ENCODE measurements at regions of chr2 and their contacts with region 1.

Region 1: DNA sequence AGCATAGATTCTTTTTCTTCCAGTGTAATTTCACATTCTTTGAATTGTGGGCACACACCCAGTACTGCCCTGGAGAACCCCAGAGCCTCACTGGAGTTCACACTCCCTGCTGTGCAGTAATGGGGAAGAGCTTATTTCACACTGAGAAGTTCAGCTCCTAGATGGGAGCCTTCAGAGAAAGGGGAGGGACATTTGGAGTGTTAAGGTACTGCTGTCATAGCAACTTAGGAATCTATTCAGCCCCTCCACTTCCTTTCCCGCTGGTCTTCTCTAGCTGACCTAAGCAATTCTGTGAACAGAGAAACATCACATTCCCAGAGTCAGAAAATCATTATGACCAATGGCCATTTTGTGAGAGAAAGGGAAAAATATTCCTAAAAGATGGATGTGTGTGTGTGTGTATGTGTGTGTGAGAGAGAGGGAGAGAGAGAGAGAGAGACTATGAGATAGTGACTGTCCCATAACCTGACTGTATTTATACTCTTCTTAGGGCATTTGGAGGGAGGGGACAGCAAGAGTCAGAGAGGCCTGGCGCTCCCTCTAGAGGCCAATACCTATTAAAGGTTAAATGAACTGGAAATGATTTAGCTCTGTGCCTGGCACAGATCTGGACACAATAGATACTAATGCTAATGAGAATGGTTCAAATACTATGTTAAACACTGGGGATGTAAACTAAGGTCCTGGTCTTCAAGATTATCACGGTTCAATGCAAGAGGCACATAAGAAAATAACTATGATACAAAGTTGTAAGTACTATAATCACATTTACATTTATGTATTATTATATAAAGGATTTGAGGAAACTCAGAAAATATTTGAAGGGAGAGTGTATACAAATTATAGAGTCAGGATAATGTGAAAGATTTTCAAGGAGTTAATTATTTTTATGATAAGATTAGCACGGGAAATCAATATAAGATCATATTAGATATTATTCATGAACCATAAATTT is 41.5 kb upstream of the RPE start:
- DNase-seq: no peak
- H3K4me3 Mint-ChIP-seq: no peak overlapping the region
- H3K27ac Mint-ChIP-seq: no peak overlapping the region
- H3K4me1 Mint-ChIP-seq: no peaks in the 10 kb centered on the region
- H3K27me3 Mint-ChIP-seq: peaks cover 11% of the 10 kb centered on the region

Region 2: DNA sequence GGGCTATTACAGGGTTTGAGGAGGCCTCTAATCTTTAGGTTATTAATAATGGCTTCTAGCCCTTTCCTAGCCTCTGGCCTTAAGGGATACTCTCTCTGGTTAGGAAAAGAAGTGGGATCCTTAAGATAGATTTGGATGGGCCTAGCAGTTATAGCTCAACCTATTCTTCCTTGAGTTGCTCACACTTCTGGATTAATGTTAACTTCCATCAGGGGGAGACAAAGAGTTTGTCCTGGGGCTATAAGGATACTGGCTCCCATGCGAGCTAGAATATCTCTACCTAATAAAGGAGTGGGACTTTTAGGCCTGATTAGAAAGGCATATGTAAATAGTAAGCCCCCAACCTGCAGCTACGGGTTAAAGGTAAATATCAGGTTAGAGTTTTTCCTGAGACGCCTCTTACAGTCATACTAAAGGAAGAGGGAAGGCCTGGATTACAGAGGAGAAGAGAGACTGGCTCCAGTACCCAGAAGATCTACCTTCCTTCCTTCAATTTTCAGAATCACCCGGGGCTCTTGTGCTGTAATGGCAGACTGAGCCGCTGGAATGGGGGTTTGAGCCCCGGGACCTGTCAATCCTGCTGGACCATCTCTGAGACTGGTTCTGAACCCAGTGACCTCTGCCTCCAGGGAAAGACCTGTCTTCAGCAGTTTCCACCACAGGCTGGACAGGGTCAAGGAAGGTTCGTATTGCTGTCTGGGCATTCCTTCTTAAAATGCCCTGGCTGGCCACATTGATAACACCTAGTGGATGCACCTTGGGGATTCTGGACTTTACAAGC is 1568.5 kb before region 1 on chr2:
- intact Hi-C with region 1: loop called (anchors 10 kb)
- DNase-seq: no peak
- H3K4me3 Mint-ChIP-seq: no peak overlapping the region
- H3K27ac Mint-ChIP-seq: no peak overlapping the region
- H3K4me1 Mint-ChIP-seq: peaks cover 1% of the 10 kb centered on the region
- H3K27me3 Mint-ChIP-seq: peaks cover 2% of the 10 kb centered on the region

Region 3: DNA sequence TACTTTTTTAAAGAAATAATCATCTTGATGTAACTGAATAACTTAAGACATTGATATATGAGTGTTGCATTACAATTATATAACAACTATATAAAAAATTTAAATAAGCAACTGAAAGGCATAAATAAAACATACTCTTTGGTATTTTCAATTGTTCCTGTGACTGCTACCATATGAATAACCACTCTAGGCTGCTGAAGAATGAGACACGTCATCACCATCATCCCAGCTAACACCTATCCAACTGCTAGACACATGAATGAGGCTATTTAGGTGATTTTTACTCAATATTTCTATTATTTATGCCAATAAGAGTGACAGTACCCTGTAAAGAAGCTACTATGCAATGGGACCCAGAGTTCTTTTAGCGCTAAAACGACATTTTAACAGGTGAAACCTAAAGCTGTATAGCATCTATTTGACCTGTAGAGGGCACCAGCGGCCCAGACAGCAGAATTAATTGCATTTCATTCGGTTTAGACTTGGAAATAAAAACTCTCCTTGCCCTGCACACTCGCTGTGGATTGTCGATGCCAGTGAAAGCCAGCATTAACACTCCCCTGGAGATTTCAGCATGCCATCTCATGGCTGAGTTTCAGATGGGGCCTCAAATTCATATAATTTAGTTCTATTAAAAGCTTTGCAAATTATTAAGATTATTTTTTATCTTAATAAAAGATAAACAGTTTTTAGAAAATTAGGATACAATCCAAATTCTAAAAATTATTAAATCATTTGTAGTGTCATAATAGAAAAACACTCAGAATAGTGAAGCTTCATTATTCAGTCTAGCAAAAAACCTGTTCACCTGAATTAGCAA is 626.5 kb before region 1 on chr2:
- intact Hi-C with region 1: loop called (anchors 10 kb)
- DNase-seq: no peak
- H3K4me3 Mint-ChIP-seq: no peak overlapping the region
- H3K27ac Mint-ChIP-seq: no peak overlapping the region
- H3K4me1 Mint-ChIP-seq: no peaks in the 10 kb centered on the region
- H3K27me3 Mint-ChIP-seq: no peaks in the 10 kb centered on the region

Region 4: DNA sequence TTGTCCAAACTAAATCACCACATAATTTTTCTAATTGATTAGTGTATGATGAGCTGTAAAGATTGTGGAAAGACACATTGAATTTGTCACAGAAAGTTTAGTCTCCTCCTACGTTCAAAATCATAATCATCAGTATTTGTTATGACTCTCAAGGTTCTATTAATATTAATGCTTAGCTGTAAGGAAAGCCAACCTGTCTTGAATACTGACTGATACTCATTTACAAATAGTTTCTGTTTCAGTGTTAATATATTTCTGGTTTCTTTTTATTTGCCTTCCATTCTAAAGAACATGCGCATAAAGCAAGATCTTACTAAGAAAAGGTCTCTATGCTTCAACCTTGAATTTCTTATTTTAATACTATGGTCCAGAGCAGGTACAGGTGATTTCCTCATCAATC is 650.5 kb after region 1 on chr2:
- intact Hi-C with region 1: no loop called
- DNase-seq: no peak
- H3K4me3 Mint-ChIP-seq: no peak overlapping the region
- H3K27ac Mint-ChIP-seq: no peak overlapping the region
- H3K4me1 Mint-ChIP-seq: no peaks in the 10 kb centered on the region
- H3K27me3 Mint-ChIP-seq: no peaks in the 10 kb centered on the region